ENCODE measurements at regions of chr4 and their contacts with region 1.

Region 1: GRCh38 chr4:169810325-169811323 is 52.9 kb upstream of the HPF1 start:
- DNase-seq: peak; percentile 52
- H3K4me3 ChIP-seq: no peak overlapping the region
- H3K27ac ChIP-seq: no peak overlapping the region
- H3K27me3 ChIP-seq: no peaks in the 10 kb centered on the region
- CTCF ChIP-seq: peak; percentile 89

Region 2: GRCh38 chr4:169612871-169613859 is 197.5 kb before region 1 on chr4:
- CTCF ChIA-PET with region 1: interaction called, 34 read pairs
- POLR2A ChIA-PET with region 1: no interaction called
- DNase-seq: no peak
- H3K4me3 ChIP-seq: peak overlapping the region; percentile 95
- H3K27ac ChIP-seq: no peak overlapping the region
- H3K27me3 ChIP-seq: no peaks in the 10 kb centered on the region
- CTCF ChIP-seq: peak; percentile 79

Region 3: GRCh38 chr4:169791527-169792156 is 19.0 kb before region 1 on chr4:
- CTCF ChIA-PET with region 1: interaction called, 29 read pairs
- POLR2A ChIA-PET with region 1: no interaction called
- DNase-seq: no peak
- H3K4me3 ChIP-seq: peak overlapping the region; percentile 48
- H3K27ac ChIP-seq: no peak overlapping the region
- H3K27me3 ChIP-seq: peaks cover 10% of the 10 kb centered on the region
- CTCF ChIP-seq: peak; percentile 66

Region 4: GRCh38 chr4:169823685-169824084 is 13.1 kb after region 1 on chr4:
- CTCF ChIA-PET with region 1: interaction called, 17 read pairs
- POLR2A ChIA-PET with region 1: no interaction called
- DNase-seq: peak; percentile 10
- H3K4me3 ChIP-seq: no peak overlapping the region
- H3K27ac ChIP-seq: no peak overlapping the region
- H3K27me3 ChIP-seq: no peaks in the 10 kb centered on the region
- CTCF ChIP-seq: no peak

Region 5: GRCh38 chr4:170089668-170090351 is 279.2 kb after region 1 on chr4 and contains the start of gene AADAT:
- CTCF ChIA-PET with region 1: interaction called, 19 read pairs
- POLR2A ChIA-PET with region 1: no interaction called
- DNase-seq: peak; percentile 41
- H3K4me3 ChIP-seq: peak within 1 kb of the TSS; percentile 66
- H3K27ac ChIP-seq: peak within 1 kb of the TSS; percentile 54
- H3K27me3 ChIP-seq: no peaks in the 10 kb centered on the region
- CTCF ChIP-seq: peak; percentile 70
- polyA plus RNA-seq, gene AADAT: 13.8 and 17.8 TPM in 2 replicates